ENCODE measurements at regions of chr12 and their contacts with region 1.

Region 1: DNA sequence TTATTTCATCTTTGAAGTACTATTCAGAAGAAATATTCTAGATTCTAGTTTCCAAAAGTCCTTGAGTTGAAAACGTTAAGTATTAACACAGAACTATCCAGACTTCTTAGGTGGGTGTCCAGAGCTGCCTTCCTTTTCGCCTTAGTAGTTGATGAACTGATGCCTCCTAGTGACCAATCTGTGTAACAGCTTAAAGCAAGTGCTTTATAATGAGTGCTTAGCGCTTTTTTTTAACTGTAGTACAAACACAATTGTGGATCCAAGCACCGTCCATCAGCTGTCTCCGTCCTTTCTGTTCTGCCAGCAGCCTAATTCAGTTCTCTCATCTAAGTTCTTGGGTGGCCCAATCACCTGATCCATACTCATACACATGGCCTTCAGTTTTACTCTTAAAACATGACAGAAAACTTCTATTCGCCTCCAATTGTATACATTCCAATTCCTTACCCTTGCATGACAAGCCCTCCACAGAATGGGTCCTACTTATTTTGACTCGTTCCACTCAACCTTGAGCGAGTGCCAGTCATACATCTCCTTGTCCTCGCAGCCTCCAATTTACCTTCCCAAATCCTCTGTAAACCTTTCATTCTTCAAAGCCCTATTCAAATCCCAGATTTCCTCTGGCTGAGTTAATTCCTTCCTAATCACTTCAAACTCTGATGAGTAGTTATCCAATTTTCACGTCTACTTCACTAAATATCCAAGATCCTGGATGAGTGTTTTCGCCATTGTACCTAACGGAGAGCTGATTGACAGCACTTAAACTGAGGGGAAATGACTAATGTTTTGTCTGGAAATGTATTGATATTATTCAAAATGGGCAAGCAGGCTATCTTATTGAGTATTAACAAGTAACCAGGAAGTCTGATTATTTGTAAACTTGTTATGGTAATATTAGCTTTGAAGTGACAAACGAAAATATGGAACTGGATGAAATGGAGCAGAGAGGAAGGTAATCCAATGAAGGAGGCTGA is 5.8 kb upstream of the PHLDA1 start:
- DNase-seq: peak in 1 of 2 donors; percentile 27
- H3K4me3 ChIP-seq: no peak overlapping the region
- H3K27ac ChIP-seq: no peak overlapping the region
- H3K4me1 ChIP-seq: peaks cover 16 to 21% of the 10 kb centered on the region in 2 donors
- H3K27me3 ChIP-seq: no peaks in the 10 kb centered on the region
- CTCF ChIP-seq: peak; percentile 57 to 94 (median 86)
- POLR2A ChIP-seq: no peak

Region 2: DNA sequence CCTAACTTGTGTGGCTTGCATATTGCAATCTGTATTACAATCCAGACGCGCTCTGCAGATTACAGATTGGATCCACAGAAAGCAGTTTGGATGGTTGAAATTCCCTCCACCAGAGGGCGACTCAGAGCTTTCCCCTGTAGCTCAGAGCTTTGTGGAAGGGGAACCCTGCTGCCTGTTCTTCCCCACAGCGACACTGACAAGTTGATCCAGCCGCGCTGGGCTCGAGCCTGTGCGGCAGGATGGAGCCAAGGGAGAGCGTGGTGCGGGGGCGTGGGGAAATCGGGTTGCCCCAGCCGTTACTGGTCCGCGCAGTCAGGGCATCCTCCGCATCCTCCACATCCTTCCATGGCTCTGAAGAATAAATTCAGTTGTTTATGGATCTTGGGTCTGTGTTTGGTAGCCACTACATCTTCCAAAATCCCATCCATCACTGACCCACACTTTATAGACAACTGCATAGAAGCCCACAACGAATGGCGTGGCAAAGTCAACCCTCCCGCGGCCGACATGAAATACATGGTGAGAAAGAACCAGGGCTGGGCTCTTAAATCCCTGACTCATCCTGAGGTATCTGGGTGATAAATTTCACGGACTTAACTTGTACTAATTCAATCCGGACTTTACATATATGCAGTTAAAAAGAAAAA is 702.9 kb before region 1 on chr12 and contains the start of gene GLIPR1L1:
- intact Hi-C with region 1: no loop called
- DNase-seq: peak; percentile 89 to 93
- H3K4me3 ChIP-seq: peak within 1 kb of the TSS in 2 of 3 donors; percentile 6 to 25
- H3K27ac ChIP-seq: no peak within 1 kb of the TSS
- H3K4me1 ChIP-seq: peaks cover 0 to 2% of the 10 kb centered on the region in 2 donors
- H3K27me3 ChIP-seq: no peaks in the 10 kb centered on the region
- CTCF ChIP-seq: peak; percentile 77 to 91 (median 85)
- POLR2A ChIP-seq: no peak
- total RNA-seq, gene GLIPR1L1: not detected

Region 3: GRCh38 chr12:75526655-75527511 is 510.5 kb before region 1 on chr12:
- intact Hi-C with region 1: loop called (anchors 5 kb)
- DNase-seq: no peak
- H3K4me3 ChIP-seq: no peak overlapping the region
- H3K27ac ChIP-seq: no peak overlapping the region
- H3K4me1 ChIP-seq: no peaks in the 10 kb centered on the region
- H3K27me3 ChIP-seq: no peaks in the 10 kb centered on the region
- CTCF ChIP-seq: peak; percentile 37 to 70 (median 54)
- POLR2A ChIP-seq: no peak

Region 4: DNA sequence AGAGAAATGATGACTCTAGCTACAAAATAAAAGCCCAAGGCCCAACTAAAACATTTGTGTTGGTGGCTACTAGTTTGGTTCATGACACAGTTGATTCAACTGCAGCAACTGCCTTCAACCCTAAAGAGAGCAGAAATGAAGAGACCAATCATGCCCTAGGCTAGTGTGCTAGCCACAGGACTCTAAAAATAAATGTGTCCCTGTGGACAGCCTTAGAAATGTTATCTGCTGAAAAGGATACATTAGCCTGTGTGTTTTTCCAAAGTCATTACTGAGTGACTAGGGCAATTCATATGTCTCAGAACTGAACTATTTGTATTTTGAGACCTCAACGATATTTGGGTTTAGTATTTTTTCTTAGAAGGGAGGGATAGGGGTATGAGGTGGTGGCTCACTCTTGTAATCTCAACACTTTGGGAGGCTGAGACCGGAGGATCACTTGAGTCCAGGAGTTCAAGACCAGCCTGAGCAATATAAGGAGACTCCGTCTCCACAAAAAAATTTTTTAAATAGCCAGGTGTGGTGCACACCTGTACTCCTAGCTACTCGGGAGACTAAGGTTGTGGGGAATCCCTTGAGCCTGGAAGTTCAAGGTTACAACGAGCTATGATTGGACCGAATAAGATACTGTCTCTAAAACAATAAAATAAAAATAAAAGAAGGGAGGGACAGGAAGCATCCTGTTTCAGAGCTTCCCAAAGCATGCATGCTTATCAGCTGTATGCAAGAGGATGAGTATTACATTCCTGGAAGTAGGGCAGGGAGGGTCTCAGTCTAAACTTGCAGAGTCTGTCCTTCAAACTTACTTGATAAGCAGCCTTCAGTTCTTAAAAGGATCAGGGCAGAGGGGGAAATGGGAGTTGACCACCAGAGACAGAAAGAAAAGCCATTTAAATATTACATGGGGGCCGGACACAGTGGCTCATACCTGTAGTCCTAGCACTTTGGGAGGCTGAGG is 76.7 kb after region 1 on chr12:
- intact Hi-C with region 1: no loop called
- DNase-seq: no peak
- H3K4me3 ChIP-seq: no peak overlapping the region
- H3K27ac ChIP-seq: no peak overlapping the region
- H3K4me1 ChIP-seq: no peaks in the 10 kb centered on the region
- H3K27me3 ChIP-seq: no peaks in the 10 kb centered on the region
- CTCF ChIP-seq: no peak
- POLR2A ChIP-seq: no peak

Region 5: DNA sequence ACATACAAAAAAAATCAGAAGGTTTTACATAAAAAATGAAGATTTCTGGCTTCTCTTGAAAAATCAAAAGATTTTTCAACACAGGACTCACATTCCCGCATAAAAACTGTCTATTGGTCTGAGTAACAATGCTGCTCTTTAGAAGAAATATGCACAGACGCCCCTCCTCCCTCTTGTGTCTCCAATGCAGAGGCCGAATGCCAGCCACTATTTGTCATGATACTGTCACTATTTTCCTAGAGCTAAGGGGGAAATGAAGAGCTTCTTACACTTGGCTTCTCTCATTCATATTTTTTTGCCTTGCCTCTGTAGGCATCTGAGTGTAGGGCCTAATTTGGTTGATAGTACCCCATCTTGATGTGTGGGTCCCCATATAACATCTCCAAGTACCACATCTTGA is 212.8 kb after region 1 on chr12:
- intact Hi-C with region 1: no loop called
- DNase-seq: no peak
- H3K4me3 ChIP-seq: no peak overlapping the region
- H3K27ac ChIP-seq: no peak overlapping the region
- H3K4me1 ChIP-seq: no peaks in the 10 kb centered on the region
- H3K27me3 ChIP-seq: no peaks in the 10 kb centered on the region
- CTCF ChIP-seq: no peak
- POLR2A ChIP-seq: no peak